ENCODE measurements at regions of chr11 and their contacts with region 1.

Region 1: GRCh38 chr11:8099291-8099899 is 18.4 kb downstream of the TUB start:
- DNase-seq: peak; percentile 39 to 68
- ATAC-seq: peak; percentile 75 to 85
- H3K4me3 ChIP-seq: no peak overlapping the region
- H3K27ac ChIP-seq: no peak overlapping the region
- H3K4me1 ChIP-seq: no peaks in the 10 kb centered on the region
- H3K27me3 ChIP-seq: no peaks in the 10 kb centered on the region
- CTCF ChIP-seq: peak; percentile 74 to 85 (median 77)
- POLR2A ChIP-seq: no peak

Region 2: GRCh38 chr11:7892840-7893254 is 206.5 kb before region 1 on chr11:
- in situ Hi-C with region 1: loop called in 1 of 4 experiments (anchors 10 kb)
- intact Hi-C with region 1: loop called (anchors 10 kb)
- DNase-seq: no peak
- ATAC-seq: peak; percentile 58 to 70
- H3K4me3 ChIP-seq: no peak overlapping the region
- H3K27ac ChIP-seq: no peak overlapping the region
- H3K4me1 ChIP-seq: no peaks in the 10 kb centered on the region
- H3K27me3 ChIP-seq: no peaks in the 10 kb centered on the region
- CTCF ChIP-seq: peak in 4 of 5 experiments; percentile 19 to 60 (median 49)
- POLR2A ChIP-seq: no peak

Region 3: GRCh38 chr11:8006349-8006977 is 92.9 kb before region 1 on chr11:
- in situ Hi-C with region 1: loop called in 2 of 4 experiments (anchors 5 to 10 kb)
- intact Hi-C with region 1: loop called (anchors 2 kb)
- DNase-seq: peak in 1 of 2 donors; percentile 47
- ATAC-seq: peak; percentile 89 to 92
- H3K4me3 ChIP-seq: no peak overlapping the region
- H3K27ac ChIP-seq: no peak overlapping the region
- H3K4me1 ChIP-seq: no peaks in the 10 kb centered on the region
- H3K27me3 ChIP-seq: peaks cover 0 to 2% (median 0%) of the 10 kb centered on the region in 3 donors
- CTCF ChIP-seq: peak; percentile 63 to 73 (median 68)
- POLR2A ChIP-seq: no peak

Region 4: GRCh38 chr11:8033305-8034105 is 65.9 kb before region 1 on chr11:
- in situ Hi-C with region 1: loop called (anchors 5 to 10 kb)
- intact Hi-C with region 1: loop called (anchors 1 kb)
- DNase-seq: peak; percentile 40 to 66
- ATAC-seq: peak; percentile 79 to 90
- H3K4me3 ChIP-seq: no peak overlapping the region
- H3K27ac ChIP-seq: no peak overlapping the region
- H3K4me1 ChIP-seq: no peaks in the 10 kb centered on the region
- H3K27me3 ChIP-seq: no peaks in the 10 kb centered on the region
- CTCF ChIP-seq: peak; percentile 77 to 91 (median 87)
- POLR2A ChIP-seq: no peak

Region 5: GRCh38 chr11:8328848-8329330 is 229.5 kb after region 1 on chr11:
- in situ Hi-C with region 1: no loop called
- intact Hi-C with region 1: no loop called
- DNase-seq: peak; percentile 32 to 76
- ATAC-seq: peak; percentile 80 to 94
- H3K4me3 ChIP-seq: peak overlapping the region; percentile 7 to 46 (median 17)
- H3K27ac ChIP-seq: no peak overlapping the region
- H3K4me1 ChIP-seq: peaks cover 4 to 5% of the 10 kb centered on the region in 2 donors
- H3K27me3 ChIP-seq: no peaks in the 10 kb centered on the region
- CTCF ChIP-seq: peak; percentile 26 to 77 (median 60)
- POLR2A ChIP-seq: no peak

Measured in gastrocnemius medialis (tissue), 4 donors.